ENCODE measurements at regions of chr10 and their contacts with region 1.

Region 1: GRCh38 chr10:75210282-75211006 is at the start of gene VDAC2:
- DNase-seq: peak; percentile 92 to 97 (median 94)
- ATAC-seq: peak; percentile 94 to 98 (median 97)
- H3K4me3 ChIP-seq: peak within 1 kb of the TSS; percentile 78 to 100 (median 91)
- H3K27ac ChIP-seq: peak within 1 kb of the TSS; percentile 98 to 100 (median 100)
- H3K4me1 ChIP-seq: peaks cover 2 to 52% (median 36%) of the 10 kb centered on the region in 12 donors
- H3K27me3 ChIP-seq: no peaks in the 10 kb centered on the region
- CTCF ChIP-seq: peak in 1 of 12 donors; percentile 23
- POLR2A ChIP-seq: peak; percentile 51 to 83
- total RNA-seq, gene VDAC2: 334 to 554 (median 472) TPM

Region 2: DNA sequence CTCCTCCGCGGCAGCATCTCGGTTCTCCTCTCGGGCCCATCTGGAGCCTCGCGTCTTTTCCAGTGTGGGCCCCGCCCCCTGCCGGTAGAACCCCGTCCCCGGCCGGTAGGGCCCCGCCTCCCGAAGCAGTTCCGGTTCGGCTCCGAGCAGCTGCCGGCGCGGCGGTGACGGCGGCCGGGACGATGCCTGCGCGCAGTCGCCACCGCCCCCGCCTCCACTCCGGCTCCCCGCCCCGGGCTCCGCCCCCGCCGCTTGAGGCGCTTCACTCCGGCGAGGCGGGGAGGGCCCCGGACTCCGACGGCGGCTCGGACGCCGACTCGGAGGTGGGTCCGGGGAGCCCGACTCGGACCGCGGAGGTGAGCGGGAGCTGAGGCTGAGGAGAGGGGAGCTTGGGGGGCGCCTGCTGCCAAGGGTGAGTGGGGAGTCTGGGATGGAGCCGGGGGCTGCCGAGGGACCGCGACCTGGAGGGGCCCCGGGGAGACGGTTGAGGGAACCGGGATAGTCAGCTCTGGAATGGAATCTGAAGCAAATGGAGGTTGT is 99.0 kb before region 1 on chr10 and contains the start of gene SAMD8:
- intact Hi-C with region 1: loop called in 6 of 10 experiments (anchors 5 to 10 kb)
- DNase-seq: peak; percentile 95 to 98 (median 98)
- ATAC-seq: peak; percentile 62 to 90 (median 89)
- H3K4me3 ChIP-seq: peak within 1 kb of the TSS; percentile 62 to 96 (median 82)
- H3K27ac ChIP-seq: peak within 1 kb of the TSS; percentile 87 to 98 (median 96)
- H3K4me1 ChIP-seq: peaks cover 0 to 62% (median 34%) of the 10 kb centered on the region in 12 donors
- H3K27me3 ChIP-seq: no peaks in the 10 kb centered on the region
- CTCF ChIP-seq: peak; percentile 20 to 64 (median 50)
- POLR2A ChIP-seq: peak; percentile 75 to 94
- total RNA-seq, gene SAMD8: 19.4 to 43.0 (median 25.1) TPM

Region 3: DNA sequence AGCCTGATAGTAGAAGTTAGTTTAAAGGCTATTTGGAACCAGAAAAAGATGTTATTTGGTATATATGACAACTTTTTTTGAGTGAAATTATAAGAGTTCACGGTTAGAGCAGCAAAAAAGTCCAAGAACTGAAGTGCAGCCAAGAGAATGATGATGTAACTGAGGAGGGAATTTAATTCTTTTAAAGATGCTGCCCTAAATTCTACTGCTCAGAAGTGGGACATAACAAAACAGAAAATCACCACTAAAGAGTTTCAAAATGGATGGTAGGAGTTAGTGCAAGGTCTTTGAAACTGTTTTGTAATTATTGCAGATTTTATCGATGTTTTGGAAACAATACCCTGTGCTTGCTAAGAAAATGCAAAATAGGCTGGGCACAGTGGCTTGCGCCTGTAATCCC is 92.4 kb before region 1 on chr10:
- intact Hi-C with region 1: loop called in 6 of 10 experiments (anchors 5 to 10 kb)
- DNase-seq: no peak
- ATAC-seq: peak in 1 of 4 donors; percentile 19
- H3K4me3 ChIP-seq: no peak overlapping the region
- H3K27ac ChIP-seq: peak overlapping the region in 2 of 12 donors; percentile 13 to 48
- H3K4me1 ChIP-seq: peaks cover 0 to 65% (median 38%) of the 10 kb centered on the region in 12 donors
- H3K27me3 ChIP-seq: no peaks in the 10 kb centered on the region
- CTCF ChIP-seq: no peak
- POLR2A ChIP-seq: no peak

Region 4: GRCh38 chr10:75187961-75188426 is 22.4 kb before region 1 on chr10:
- intact Hi-C with region 1: loop called in 1 of 10 experiments (anchors 1 kb)
- DNase-seq: peak in 4 of 5 donors; percentile 40 to 47 (median 44)
- ATAC-seq: peak in 3 of 4 donors; percentile 32 to 57 (median 52)
- H3K4me3 ChIP-seq: no peak overlapping the region
- H3K27ac ChIP-seq: no peak overlapping the region
- H3K4me1 ChIP-seq: peaks cover 0 to 24% (median 10%) of the 10 kb centered on the region in 12 donors
- H3K27me3 ChIP-seq: no peaks in the 10 kb centered on the region
- CTCF ChIP-seq: peak; percentile 51 to 79 (median 69)
- POLR2A ChIP-seq: no peak

Region 5: GRCh38 chr10:75229971-75230370 is 19.5 kb after region 1 on chr10:
- intact Hi-C with region 1: loop called in 2 of 10 experiments (anchors 2 kb)
- DNase-seq: no peak
- ATAC-seq: no peak
- H3K4me3 ChIP-seq: no peak overlapping the region
- H3K27ac ChIP-seq: peak overlapping the region in 3 of 12 donors; percentile 21 to 84 (median 47)
- H3K4me1 ChIP-seq: peaks cover 20 to 71% (median 53%) of the 10 kb centered on the region in 12 donors
- H3K27me3 ChIP-seq: no peaks in the 10 kb centered on the region
- CTCF ChIP-seq: no peak
- POLR2A ChIP-seq: no peak